Activated naive CD4-positive, alpha-beta T cell treated with anti-CD3 and anti-CD28 coated beads for 36 hours (primary cell): ENCODE measurements at regions of chr7 and their contacts with region 1.

Region 1: DNA sequence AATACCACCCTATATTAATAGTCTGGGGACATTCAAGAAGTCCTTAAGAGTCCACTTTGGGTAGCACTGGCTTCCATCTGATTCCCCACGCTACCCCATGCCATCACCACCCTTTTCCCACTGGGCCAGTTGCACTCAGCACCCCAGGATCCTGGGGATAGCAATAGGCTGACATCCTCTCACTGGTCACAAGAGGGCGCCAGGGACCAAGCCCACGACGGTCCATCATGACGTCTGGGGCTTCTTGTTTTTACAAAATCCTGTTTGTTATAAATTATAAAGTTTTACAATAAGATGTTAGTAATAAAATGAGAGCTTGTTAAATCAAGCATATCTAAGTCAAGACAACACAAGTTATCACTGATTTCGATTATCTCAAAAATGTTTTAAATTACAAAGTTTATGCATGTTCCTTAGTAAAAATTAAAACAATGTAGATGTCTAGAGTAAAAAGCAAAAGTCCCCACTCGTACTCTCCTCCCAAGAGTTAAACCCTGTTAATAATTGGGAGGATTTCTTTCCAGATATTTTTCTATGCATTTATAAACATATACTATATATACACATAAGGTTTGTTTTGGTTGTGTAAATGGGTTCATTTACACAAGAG is 15.4 kb downstream of the GPNMB start:
- DNase-seq: peak; percentile 75
- H3K4me3 Mint-ChIP-seq: no peak overlapping the region
- H3K27ac Mint-ChIP-seq: no peak overlapping the region
- H3K4me1 Mint-ChIP-seq: no peaks in the 10 kb centered on the region
- H3K27me3 Mint-ChIP-seq: peaks cover 2% of the 10 kb centered on the region

Region 2: GRCh38 chr7:23093546-23093945 is 168.4 kb before region 1 on chr7:
- CTCF ChIA-PET with region 1: interaction called, 3 read pairs
- intact Hi-C with region 1: loop called (anchors 5 kb)
- DNase-seq: no peak
- H3K4me3 Mint-ChIP-seq: no peak overlapping the region
- H3K27ac Mint-ChIP-seq: no peak overlapping the region
- H3K4me1 Mint-ChIP-seq: no peaks in the 10 kb centered on the region
- H3K27me3 Mint-ChIP-seq: no peaks in the 10 kb centered on the region

Region 3: DNA sequence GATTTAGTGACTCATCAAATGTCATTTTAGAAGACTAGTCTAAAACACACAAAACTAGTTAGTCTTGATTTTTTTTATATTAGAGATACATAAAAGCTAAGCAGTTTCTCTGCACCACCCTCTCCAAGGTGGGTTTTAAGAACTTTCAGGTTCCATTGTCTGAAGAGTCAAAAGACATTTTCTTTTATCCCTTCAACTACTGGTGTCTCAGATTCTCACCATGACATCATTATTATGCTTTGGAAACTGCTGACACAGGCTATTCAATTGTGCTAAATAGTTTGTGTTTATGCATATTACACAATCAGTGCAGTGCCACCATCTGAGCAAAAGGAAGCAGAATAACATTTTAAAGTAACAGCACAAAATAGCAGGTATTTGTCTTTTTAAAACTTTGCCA is 156.1 kb after region 1 on chr7:
- CTCF ChIA-PET with region 1: no interaction called
- intact Hi-C with region 1: loop called (anchors 1 kb)
- DNase-seq: no peak
- H3K4me3 Mint-ChIP-seq: no peak overlapping the region
- H3K27ac Mint-ChIP-seq: no peak overlapping the region
- H3K4me1 Mint-ChIP-seq: peaks cover 10% of the 10 kb centered on the region
- H3K27me3 Mint-ChIP-seq: peaks cover 3% of the 10 kb centered on the region

Region 4: DNA sequence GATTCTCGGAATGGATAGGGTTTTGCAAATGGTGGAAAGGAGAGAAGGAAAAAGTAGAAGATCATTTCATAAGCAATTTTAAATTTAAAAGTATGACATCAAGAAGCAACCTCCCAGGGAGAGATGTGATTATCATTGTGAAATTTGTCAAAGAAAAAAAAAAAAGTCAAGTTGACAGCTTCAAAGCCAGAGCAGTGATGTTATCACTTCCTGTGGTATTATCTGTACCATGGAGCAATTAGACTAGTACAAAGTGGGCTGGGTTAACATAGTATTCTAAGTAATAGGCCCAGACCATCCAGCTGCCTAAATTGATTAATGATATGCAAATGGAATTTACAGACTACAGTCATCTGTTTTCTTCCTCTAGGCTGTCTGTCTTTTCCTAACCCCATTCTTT is 938.0 kb after region 1 on chr7:
- CTCF ChIA-PET with region 1: no interaction called
- intact Hi-C with region 1: no loop called
- DNase-seq: no peak
- H3K4me3 Mint-ChIP-seq: no peak overlapping the region
- H3K27ac Mint-ChIP-seq: no peak overlapping the region
- H3K4me1 Mint-ChIP-seq: peaks cover 21% of the 10 kb centered on the region
- H3K27me3 Mint-ChIP-seq: no peaks in the 10 kb centered on the region